ENCODE measurements at regions of chr3 and their contacts with region 1.

Region 1: GRCh38 chr3:51391075-51391567 is at the start of gene RBM15B:
- DNase-seq: peak; percentile 98
- H3K4me3 ChIP-seq: peak within 1 kb of the TSS; percentile 72 to 91 (median 87)
- H3K27ac ChIP-seq: peak within 1 kb of the TSS; percentile 93 to 94 (median 94)
- H3K4me1 ChIP-seq: peaks cover 26 to 77% (median 66%) of the 10 kb centered on the region in 4 donors
- H3K27me3 ChIP-seq: no peaks in the 10 kb centered on the region
- CTCF ChIP-seq: peak in 3 of 5 experiments; percentile 82 to 94 (median 93)
- EP300 ChIP-seq: no peak
- POLR2A ChIP-seq: peak; percentile 18
- total RNA-seq, gene RBM15B: 19.1 to 69.9 (median 28.0) TPM

Region 2: DNA sequence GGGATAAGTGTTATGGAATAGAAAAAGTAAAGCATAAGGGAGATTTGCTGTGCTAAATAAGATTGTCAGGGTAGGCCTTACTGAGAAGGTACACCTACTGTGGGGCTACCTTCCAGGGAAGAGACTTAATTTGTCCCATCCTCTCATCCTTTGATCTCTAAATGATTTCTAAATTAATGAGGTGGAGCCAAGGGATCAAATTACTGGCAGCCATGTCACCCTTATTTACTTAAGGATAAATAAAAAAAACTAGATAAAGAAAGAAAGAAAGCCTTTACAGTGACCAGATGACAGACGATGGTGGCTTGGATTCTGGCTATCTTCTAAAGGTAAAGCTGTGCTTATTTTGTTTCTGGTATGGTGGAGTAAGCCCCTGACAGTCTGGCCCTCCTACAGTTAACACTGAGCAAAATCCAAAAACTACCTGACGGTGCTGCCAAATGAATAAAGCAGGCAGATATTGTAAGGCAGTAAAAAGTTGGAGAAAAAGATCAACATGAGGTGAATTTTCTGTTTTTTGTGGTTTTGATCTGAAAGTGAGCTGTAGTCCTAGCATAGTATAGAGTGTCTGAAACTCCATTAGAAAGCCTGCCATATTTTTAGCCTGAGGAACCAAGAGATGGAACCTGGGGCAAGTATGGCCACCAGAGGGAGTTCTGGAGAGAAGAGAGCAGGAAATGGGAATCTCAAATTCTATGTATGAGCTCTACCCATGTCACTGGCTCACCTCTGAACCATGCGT is 291.2 kb before region 1 on chr3:
- in situ Hi-C with region 1: no loop called
- intact Hi-C with region 1: no loop called
- DNase-seq: peak; percentile 50
- H3K4me3 ChIP-seq: no peak overlapping the region
- H3K27ac ChIP-seq: no peak overlapping the region
- H3K4me1 ChIP-seq: no peaks in the 10 kb centered on the region
- H3K27me3 ChIP-seq: no peaks in the 10 kb centered on the region
- CTCF ChIP-seq: peak; percentile 45 to 68 (median 58)
- EP300 ChIP-seq: no peak
- POLR2A ChIP-seq: no peak

Region 3: GRCh38 chr3:51670823-51671733 is 280.0 kb after region 1 on chr3 and contains the start of gene TEX264:
- in situ Hi-C with region 1: loop called in 2 of 4 experiments (anchors 25 kb)
- intact Hi-C with region 1: no loop called
- DNase-seq: peak; percentile 94
- H3K4me3 ChIP-seq: peak within 1 kb of the TSS; percentile 76 to 98 (median 82)
- H3K27ac ChIP-seq: peak within 1 kb of the TSS; percentile 96 to 98 (median 97)
- H3K4me1 ChIP-seq: peaks cover 10 to 39% (median 34%) of the 10 kb centered on the region in 4 donors
- H3K27me3 ChIP-seq: no peaks in the 10 kb centered on the region
- CTCF ChIP-seq: no peak
- EP300 ChIP-seq: no peak
- POLR2A ChIP-seq: peak; percentile 79
- total RNA-seq, gene TEX264: 60.9 to 116 (median 88.2) TPM

Region 4: DNA sequence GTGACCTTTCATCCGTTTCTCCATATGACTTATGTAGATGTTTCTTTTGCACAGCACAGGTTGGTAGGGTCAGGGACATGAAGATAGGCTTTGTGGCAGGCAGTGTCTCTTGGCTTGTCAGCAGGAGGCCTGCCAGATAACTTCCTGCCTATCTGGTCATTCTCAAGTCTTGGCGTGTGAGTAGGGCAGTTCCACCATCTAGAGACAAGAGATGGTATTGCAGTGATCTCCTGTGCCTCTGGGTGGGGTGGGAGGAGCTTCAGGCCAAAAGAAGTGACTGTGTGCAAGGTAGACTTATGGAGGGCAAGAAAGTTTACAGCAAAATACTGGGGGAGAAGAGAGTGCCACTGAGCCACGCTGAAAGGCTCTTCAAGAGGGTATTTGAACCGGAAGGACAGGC is 291.0 kb after region 1 on chr3:
- in situ Hi-C with region 1: loop called in 1 of 4 experiments (anchors 25 kb)
- intact Hi-C with region 1: loop called (anchors 10 kb)
- DNase-seq: peak; percentile 74
- H3K4me3 ChIP-seq: no peak overlapping the region
- H3K27ac ChIP-seq: peak overlapping the region; percentile 28 to 58 (median 42)
- H3K4me1 ChIP-seq: peaks cover 13 to 33% (median 21%) of the 10 kb centered on the region in 4 donors
- H3K27me3 ChIP-seq: no peaks in the 10 kb centered on the region
- CTCF ChIP-seq: peak; percentile 70 to 93 (median 84)
- EP300 ChIP-seq: no peak
- POLR2A ChIP-seq: no peak

Region 5: GRCh38 chr3:52614689-52615088 is 1223.6 kb after region 1 on chr3:
- in situ Hi-C with region 1: no loop called
- intact Hi-C with region 1: no loop called
- DNase-seq: no peak
- H3K4me3 ChIP-seq: no peak overlapping the region
- H3K27ac ChIP-seq: no peak overlapping the region
- H3K4me1 ChIP-seq: no peaks in the 10 kb centered on the region
- H3K27me3 ChIP-seq: no peaks in the 10 kb centered on the region
- CTCF ChIP-seq: no peak
- EP300 ChIP-seq: no peak
- POLR2A ChIP-seq: no peak